ENCODE measurements at regions of chr5 and their contacts with region 1.

Region 1: DNA sequence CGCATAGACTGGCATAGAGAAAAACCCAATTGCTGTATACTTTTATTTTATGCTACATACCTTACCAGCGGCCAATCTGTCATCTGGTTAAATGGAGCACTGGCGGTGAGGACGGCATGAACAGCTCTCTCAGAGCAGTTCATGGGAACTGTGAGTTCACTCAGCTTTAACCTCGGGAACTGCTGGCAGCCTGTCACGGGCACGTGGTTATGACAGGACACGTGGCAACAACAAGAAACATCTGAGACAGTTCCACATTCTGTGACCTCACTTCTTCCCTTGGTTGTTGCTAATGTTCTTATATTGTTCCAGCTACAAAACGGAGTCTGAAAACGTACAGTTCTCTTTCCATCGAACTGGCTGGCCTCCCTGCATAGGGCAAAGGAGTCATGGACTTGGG is 246.2 kb upstream of the DAP start:
- DNase-seq: no peak

Region 2: DNA sequence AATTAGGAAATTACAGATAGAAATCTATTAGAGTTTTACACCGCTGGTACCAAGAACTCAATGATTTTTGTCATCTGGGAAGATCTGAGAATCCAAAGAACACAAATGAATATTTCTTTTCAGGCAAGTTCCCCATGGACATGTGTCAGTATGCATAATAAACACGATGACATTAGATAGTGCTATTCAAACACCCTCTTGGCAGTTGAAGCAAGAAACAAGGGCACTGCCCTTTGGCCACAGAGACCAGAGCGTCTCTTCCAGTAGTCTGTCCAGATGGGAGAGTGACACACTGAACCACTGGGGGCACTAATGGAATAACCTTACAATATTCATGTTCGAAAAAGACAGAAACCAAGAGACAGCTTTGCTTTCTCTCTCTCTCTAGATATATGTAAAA is 595.0 kb after region 1 on chr5:
- intact Hi-C with region 1: loop called (anchors 10 kb)
- DNase-seq: no peak